Sigmoid colon (tissue), 7 donors: ENCODE measurements at regions of chr17 and their contacts with region 1.

Region 1: DNA sequence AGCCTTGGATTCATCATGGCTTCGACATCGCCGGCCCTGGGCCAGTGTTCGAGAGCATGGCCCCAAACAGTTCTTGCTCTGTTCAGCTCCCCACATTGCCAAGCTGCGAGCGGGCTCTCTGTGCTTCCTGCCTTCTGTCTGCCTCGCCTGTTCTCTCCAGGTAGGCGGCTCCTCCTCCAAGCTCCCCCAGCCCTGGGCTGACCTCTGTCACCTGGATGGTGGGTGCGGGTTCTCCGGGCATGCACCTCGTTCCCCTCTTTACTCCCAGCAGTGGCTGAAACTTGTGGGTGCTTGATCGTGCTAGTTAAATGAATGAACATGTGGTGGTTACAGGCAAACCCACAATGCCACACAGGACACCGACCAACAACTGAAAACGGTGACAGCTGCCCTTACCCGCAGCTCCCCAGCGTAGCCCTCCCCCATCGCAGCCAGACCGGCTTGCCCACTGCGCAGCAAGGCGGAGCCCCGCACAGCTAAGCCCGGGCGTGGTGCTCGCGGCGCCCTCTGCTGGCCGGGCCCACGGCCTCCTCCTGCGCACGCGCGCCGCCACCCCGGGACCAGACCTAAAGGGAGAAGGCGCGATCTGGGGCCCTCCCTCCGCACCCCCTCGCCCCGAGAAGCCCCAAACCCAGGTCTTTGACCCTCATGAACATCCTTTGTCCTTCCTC is 23.0 kb upstream of the EIF1 start:
- DNase-seq: peak; percentile 93
- H3K4me3 ChIP-seq: peak overlapping the region; percentile 41 to 54 (median 46)
- H3K27ac ChIP-seq: peak overlapping the region; percentile 86 to 92 (median 89)
- H3K4me1 ChIP-seq: peaks cover 0 to 26% (median 17%) of the 10 kb centered on the region in 4 donors
- H3K27me3 ChIP-seq: no peaks in the 10 kb centered on the region
- CTCF ChIP-seq: peak; percentile 90 to 94 (median 92)
- EP300 ChIP-seq: no peak
- POLR2A ChIP-seq: peak; percentile 43 to 68

Region 2: DNA sequence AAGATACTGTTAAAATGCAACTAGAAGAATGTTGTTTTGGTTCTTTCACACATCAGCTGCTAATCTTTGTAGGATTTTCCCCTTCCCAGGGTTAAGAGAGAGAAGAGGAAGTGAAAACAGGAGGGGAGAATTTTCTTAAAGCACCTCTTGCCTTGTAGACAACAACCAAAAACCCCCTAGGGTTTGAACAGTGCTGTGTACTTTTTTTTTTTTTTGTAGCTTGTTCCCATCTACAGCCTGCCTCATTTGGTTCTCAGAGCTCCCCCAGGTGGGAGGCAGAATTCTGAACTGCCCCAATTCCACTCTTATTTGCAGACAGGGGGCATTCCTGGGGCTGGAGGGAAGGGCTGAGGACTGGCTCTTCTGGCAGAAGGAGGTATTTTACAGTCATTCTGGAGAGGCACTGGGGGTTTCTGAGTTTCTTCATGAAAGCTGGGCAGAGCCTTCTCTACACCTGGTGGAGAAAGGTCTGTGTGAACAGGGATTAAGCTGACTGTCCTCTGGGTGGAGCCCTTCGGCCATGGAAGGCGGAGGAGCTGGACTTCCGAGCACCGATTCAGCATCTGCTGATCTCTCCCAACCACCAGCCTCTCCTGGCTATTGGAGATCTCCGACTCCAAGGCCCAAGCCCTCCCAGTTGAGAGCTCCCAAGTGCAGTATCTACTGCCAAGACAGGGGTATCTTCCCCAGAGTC is 1050.3 kb before region 1 on chr17:
- intact Hi-C with region 1: loop called (anchors 10 kb)
- DNase-seq: no peak
- H3K4me3 ChIP-seq: no peak overlapping the region
- H3K27ac ChIP-seq: no peak overlapping the region
- H3K4me1 ChIP-seq: peaks cover 0 to 9% (median 8%) of the 10 kb centered on the region in 4 donors
- H3K27me3 ChIP-seq: peaks cover 0 to 39% (median 0%) of the 10 kb centered on the region in 3 donors
- CTCF ChIP-seq: peak in 1 of 4 experiments; percentile 25
- EP300 ChIP-seq: no peak
- POLR2A ChIP-seq: no peak

Region 3: GRCh38 chr17:40803617-40804082 is 862.1 kb before region 1 on chr17:
- intact Hi-C with region 1: loop called (anchors 5 kb)
- DNase-seq: peak; percentile 75
- H3K4me3 ChIP-seq: no peak overlapping the region
- H3K27ac ChIP-seq: no peak overlapping the region
- H3K4me1 ChIP-seq: no peaks in the 10 kb centered on the region
- H3K27me3 ChIP-seq: peaks cover 0 to 39% (median 3%) of the 10 kb centered on the region in 3 donors
- CTCF ChIP-seq: peak; percentile 40 to 66 (median 48)
- EP300 ChIP-seq: no peak
- POLR2A ChIP-seq: no peak

Region 4: GRCh38 chr17:41548844-41549595 is 116.7 kb before region 1 on chr17:
- intact Hi-C with region 1: loop called (anchors 1 kb)
- DNase-seq: peak; percentile 85
- H3K4me3 ChIP-seq: peak overlapping the region in 3 of 4 donors; percentile 5 to 33 (median 30)
- H3K27ac ChIP-seq: peak overlapping the region in 3 of 4 donors; percentile 54 to 65 (median 56)
- H3K4me1 ChIP-seq: peaks cover 0 to 30% (median 23%) of the 10 kb centered on the region in 4 donors
- H3K27me3 ChIP-seq: no peaks in the 10 kb centered on the region
- CTCF ChIP-seq: peak; percentile 59 to 91 (median 81)
- EP300 ChIP-seq: no peak
- POLR2A ChIP-seq: no peak

Region 5: GRCh38 chr17:41688699-41689496 is 23.2 kb after region 1 on chr17 and contains the start of gene EIF1:
- intact Hi-C with region 1: loop called (anchors 2 kb)
- DNase-seq: peak; percentile 100
- H3K4me3 ChIP-seq: peak within 1 kb of the TSS; percentile 83 to 99 (median 87)
- H3K27ac ChIP-seq: peak within 1 kb of the TSS; percentile 99 to 100 (median 99)
- H3K4me1 ChIP-seq: peaks cover 0 to 31% (median 26%) of the 10 kb centered on the region in 4 donors
- H3K27me3 ChIP-seq: no peaks in the 10 kb centered on the region
- CTCF ChIP-seq: no peak
- EP300 ChIP-seq: peak in 1 of 4 donors; percentile 86
- POLR2A ChIP-seq: peak; percentile 100
- total RNA-seq, gene EIF1: 246 to 572 (median 430) TPM